PC-3 (cell line): ENCODE measurements at regions of chr19 and their contacts with region 1.

Region 1: GRCh38 chr19:11461453-11461852 is 19.4 kb downstream of the ELAVL3 start:
- DNase-seq: no peak
- ATAC-seq: no peak
- H3K4me3 ChIP-seq: no peak overlapping the region
- H3K27ac ChIP-seq: no peak overlapping the region
- H3K4me1 ChIP-seq: no peaks in the 10 kb centered on the region
- H3K27me3 ChIP-seq: no peaks in the 10 kb centered on the region
- CTCF ChIP-seq: no peak

Region 2: DNA sequence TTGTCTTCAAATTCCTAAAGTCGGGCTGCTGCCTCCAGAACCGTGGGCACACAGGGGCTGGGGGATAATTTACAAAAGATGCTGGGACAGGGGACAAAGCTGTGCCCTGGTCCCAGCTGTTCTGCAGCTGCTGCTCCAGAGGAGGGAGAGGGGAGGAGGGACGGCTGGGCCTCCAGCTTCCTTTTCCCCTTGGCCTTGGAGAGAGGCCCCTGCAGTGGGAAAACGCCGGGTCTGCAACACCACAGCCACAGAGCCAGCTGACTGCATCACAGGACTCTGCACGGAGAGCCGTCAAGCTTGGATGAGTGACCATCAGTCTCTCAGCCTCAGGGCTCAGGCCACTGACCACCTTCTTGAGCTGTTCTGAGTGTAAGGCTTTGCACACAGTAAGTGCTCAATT is 205.3 kb before region 1 on chr19:
- CTCF ChIA-PET with region 1: no interaction called
- POLR2A ChIA-PET with region 1: interaction called, 20 read pairs
- intact Hi-C with region 1: no loop called
- DNase-seq: no peak
- ATAC-seq: no peak
- H3K4me3 ChIP-seq: no peak overlapping the region
- H3K27ac ChIP-seq: no peak overlapping the region
- H3K4me1 ChIP-seq: no peaks in the 10 kb centered on the region
- H3K27me3 ChIP-seq: no peaks in the 10 kb centered on the region
- CTCF ChIP-seq: no peak

Region 3: GRCh38 chr19:11505032-11505503 is 43.6 kb after region 1 on chr19:
- CTCF ChIA-PET with region 1: no interaction called
- POLR2A ChIA-PET with region 1: no interaction called
- intact Hi-C with region 1: no loop called
- DNase-seq: peak; percentile 99
- ATAC-seq: peak; percentile 96
- H3K4me3 ChIP-seq: peak overlapping the region; percentile 84
- H3K27ac ChIP-seq: peak overlapping the region; percentile 65
- H3K4me1 ChIP-seq: peaks cover 15% of the 10 kb centered on the region
- H3K27me3 ChIP-seq: no peaks in the 10 kb centered on the region
- CTCF ChIP-seq: no peak